CD4-positive, alpha-beta memory T cell (primary cell): ENCODE measurements at regions of chr19 and their contacts with region 1.

Region 1: DNA sequence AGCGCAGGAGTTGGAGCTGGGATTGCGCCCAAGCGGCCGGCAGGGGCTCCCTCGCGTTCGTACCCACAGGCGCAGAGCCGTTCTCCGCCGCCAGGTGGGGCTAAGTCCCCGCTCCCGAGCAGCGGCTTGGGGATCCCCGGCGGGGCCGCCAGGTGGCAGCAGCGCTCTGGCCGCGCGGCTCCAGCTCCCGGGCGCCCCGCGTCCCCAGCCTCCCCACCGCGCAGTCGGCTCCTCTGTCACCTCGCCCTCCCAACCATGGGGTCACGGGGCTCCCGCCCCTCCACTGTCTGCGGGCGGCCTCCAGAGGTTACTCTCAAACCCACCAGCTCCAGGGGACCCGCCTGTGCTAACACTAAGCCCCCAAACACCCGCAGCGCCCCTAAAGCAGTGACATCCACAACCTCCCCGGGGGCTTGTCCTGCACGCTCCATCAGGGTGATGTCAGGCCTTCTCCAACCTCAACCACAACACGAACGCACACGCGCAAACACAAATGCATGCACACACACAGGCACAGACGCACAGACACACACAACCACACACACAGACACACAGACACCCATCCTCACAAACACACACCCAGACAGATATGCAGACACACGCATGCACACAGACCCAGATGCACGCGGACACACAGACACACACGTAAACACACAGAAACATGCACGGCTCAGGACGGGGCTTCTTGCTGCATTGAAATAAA is 18.4 kb upstream of the KCTD15 start:
- DNase-seq: peak; percentile 73 to 86 (median 83)
- H3K4me3 ChIP-seq: no peak overlapping the region
- H3K4me3 Mint-ChIP-seq: peak overlapping the region; percentile 7 to 62 (median 44)
- H3K27ac ChIP-seq: no peak overlapping the region
- H3K27ac Mint-ChIP-seq: peak overlapping the region in 2 of 7 donors; percentile 61 to 70
- H3K4me1 ChIP-seq: peaks cover 12% of the 10 kb centered on the region
- H3K4me1 Mint-ChIP-seq: peaks cover 5 to 48% (median 18%) of the 10 kb centered on the region in 4 donors
- H3K27me3 ChIP-seq: peaks cover 3% of the 10 kb centered on the region
- H3K27me3 Mint-ChIP-seq: peaks cover 10 to 26% of the 10 kb centered on the region in 2 donors

Region 2: GRCh38 chr19:33795370-33796163 is 17.3 kb after region 1 on chr19:
- CTCF ChIA-PET with region 1: interaction called, 16 read pairs
- POLR2A ChIA-PET with region 1: interaction called, 41 read pairs
- intact Hi-C with region 1: no loop called
- DNase-seq: peak; percentile 31 to 54 (median 45)
- H3K4me3 ChIP-seq: peak overlapping the region in 1 of 2 donors; percentile 35
- H3K4me3 Mint-ChIP-seq: peak overlapping the region; percentile 74 to 87 (median 78)
- H3K27ac ChIP-seq: peak overlapping the region; percentile 15
- H3K27ac Mint-ChIP-seq: peak overlapping the region in 3 of 7 donors; percentile 16 to 77 (median 47)
- H3K4me1 ChIP-seq: peaks cover 14% of the 10 kb centered on the region
- H3K4me1 Mint-ChIP-seq: peaks cover 3 to 29% (median 5%) of the 10 kb centered on the region in 4 donors
- H3K27me3 ChIP-seq: peaks cover 11% of the 10 kb centered on the region
- H3K27me3 Mint-ChIP-seq: peaks cover 13 to 17% of the 10 kb centered on the region in 2 donors

Region 3: DNA sequence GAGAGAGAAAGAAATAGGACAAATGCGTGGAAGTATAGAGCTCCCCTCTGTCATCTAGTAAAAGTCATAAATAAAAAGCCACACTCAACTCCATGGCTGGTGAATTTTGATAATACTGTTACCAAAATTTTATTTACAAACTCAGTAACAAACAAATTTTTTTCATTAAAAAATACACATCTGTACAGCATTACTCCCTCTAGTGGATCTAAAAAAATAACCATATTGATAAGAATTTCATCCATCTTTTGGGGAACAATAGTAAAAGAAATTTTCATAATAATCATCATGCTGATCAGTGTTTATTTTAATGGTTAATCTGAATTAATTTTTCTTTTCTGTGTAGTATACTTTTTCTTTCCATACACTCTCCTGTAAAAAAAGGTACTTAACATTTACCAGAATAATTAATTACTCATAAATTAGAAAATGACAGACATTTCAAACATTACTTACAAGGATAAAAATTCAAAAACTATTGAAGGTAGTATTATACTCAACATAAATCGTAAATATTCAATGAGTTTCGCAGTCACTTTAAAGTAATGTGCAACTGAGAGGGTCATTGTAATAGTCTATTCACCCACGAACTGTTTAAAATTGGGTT is 220.6 kb after region 1 on chr19:
- CTCF ChIA-PET with region 1: interaction called, 24 read pairs
- POLR2A ChIA-PET with region 1: no interaction called
- intact Hi-C with region 1: loop called (anchors 1 kb)
- DNase-seq: peak in 4 of 5 donors; percentile 1 to 18 (median 4)
- H3K4me3 ChIP-seq: no peak overlapping the region
- H3K4me3 Mint-ChIP-seq: no peak overlapping the region
- H3K27ac ChIP-seq: no peak overlapping the region
- H3K27ac Mint-ChIP-seq: no peak overlapping the region
- H3K4me1 ChIP-seq: no peaks in the 10 kb centered on the region
- H3K4me1 Mint-ChIP-seq: no peaks in the 10 kb centered on the region
- H3K27me3 ChIP-seq: peaks cover 3% of the 10 kb centered on the region
- H3K27me3 Mint-ChIP-seq: peaks cover 15 to 19% of the 10 kb centered on the region in 2 donors

Region 4: GRCh38 chr19:34041925-34042521 is 263.8 kb after region 1 on chr19:
- CTCF ChIA-PET with region 1: no interaction called
- POLR2A ChIA-PET with region 1: no interaction called
- intact Hi-C with region 1: no loop called
- DNase-seq: peak; percentile 41 to 61 (median 45)
- H3K4me3 ChIP-seq: no peak overlapping the region
- H3K4me3 Mint-ChIP-seq: no peak overlapping the region
- H3K27ac ChIP-seq: no peak overlapping the region
- H3K27ac Mint-ChIP-seq: no peak overlapping the region
- H3K4me1 ChIP-seq: no peaks in the 10 kb centered on the region
- H3K4me1 Mint-ChIP-seq: peaks cover 0 to 2% (median 0%) of the 10 kb centered on the region in 4 donors
- H3K27me3 ChIP-seq: no peaks in the 10 kb centered on the region
- H3K27me3 Mint-ChIP-seq: peaks cover 7 to 23% of the 10 kb centered on the region in 2 donors

Region 5: DNA sequence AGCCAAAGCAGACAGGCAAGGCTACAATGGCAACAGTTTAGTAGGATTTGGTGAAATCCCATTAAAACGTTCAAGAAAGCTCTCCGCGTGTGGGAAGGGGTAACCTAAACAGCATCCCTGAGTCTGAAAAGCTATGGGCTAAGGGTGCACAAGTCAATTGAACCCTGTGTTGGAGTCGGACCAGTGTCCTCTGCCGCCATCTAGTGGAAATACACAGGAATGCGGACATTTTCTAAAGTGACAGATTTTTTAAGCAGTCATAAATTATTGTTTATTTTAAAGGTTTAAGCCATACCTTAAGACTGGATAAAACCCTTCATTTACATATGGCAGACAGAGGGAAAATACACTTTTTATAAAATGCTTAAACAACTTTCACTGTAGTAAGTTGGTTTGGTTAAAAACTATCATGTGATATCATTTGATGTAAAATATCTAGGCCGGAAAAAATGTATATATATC is 367.5 kb after region 1 on chr19:
- CTCF ChIA-PET with region 1: interaction called, 12 read pairs
- POLR2A ChIA-PET with region 1: no interaction called
- intact Hi-C with region 1: loop called (anchors 1 kb)
- DNase-seq: peak; percentile 54 to 60 (median 59)
- H3K4me3 ChIP-seq: no peak overlapping the region
- H3K4me3 Mint-ChIP-seq: no peak overlapping the region
- H3K27ac ChIP-seq: no peak overlapping the region
- H3K27ac Mint-ChIP-seq: no peak overlapping the region
- H3K4me1 ChIP-seq: no peaks in the 10 kb centered on the region
- H3K4me1 Mint-ChIP-seq: peaks cover 0 to 2% (median under 1%) of the 10 kb centered on the region in 4 donors
- H3K27me3 ChIP-seq: no peaks in the 10 kb centered on the region
- H3K27me3 Mint-ChIP-seq: peaks cover 0 to 1% of the 10 kb centered on the region in 2 donors